Panc1 (cell line): ENCODE measurements at regions of chr16 and their contacts with region 1.

Region 1: GRCh38 chr16:54142787-54143186 is 143.8 kb downstream of the IRX3 start:
- DNase-seq: no peak
- ATAC-seq: no peak
- H3K4me3 ChIP-seq: no peak overlapping the region
- H3K27ac ChIP-seq: no peak overlapping the region
- H3K4me1 ChIP-seq: no peaks in the 10 kb centered on the region
- H3K27me3 ChIP-seq: no peaks in the 10 kb centered on the region
- CTCF ChIP-seq: no peak

Region 2: GRCh38 chr16:54242199-54242598 is 99.4 kb after region 1 on chr16:
- CTCF ChIA-PET with region 1: no interaction called
- POLR2A ChIA-PET with region 1: interaction called, 14 read pairs
- in situ Hi-C with region 1: no loop called
- intact Hi-C with region 1: no loop called
- DNase-seq: no peak
- ATAC-seq: no peak
- H3K4me3 ChIP-seq: no peak overlapping the region
- H3K27ac ChIP-seq: no peak overlapping the region
- H3K4me1 ChIP-seq: no peaks in the 10 kb centered on the region
- H3K27me3 ChIP-seq: no peaks in the 10 kb centered on the region
- CTCF ChIP-seq: no peak

Region 3: DNA sequence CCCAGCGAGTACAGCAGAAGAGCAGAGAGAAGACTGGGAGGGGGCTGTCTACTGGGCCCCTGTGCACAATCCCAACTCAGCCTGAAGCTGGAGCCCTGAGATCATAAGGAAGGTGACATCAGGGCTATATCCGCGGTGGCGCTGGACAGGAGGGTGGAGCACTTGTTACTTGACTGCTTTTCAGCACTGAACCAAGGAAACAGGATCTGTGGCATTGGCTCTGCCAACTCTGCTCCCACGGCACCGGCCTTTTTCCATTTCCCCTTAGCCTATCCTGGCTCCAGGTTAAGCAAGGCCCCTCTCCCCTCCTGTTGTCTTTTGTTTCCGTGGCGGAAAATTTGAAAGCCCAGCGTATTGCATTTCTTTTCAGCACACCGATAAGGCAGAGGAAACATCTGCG is 268.8 kb after region 1 on chr16:
- CTCF ChIA-PET with region 1: no interaction called
- POLR2A ChIA-PET with region 1: no interaction called
- in situ Hi-C with region 1: no loop called
- intact Hi-C with region 1: no loop called
- DNase-seq: no peak
- ATAC-seq: no peak
- H3K4me3 ChIP-seq: no peak overlapping the region
- H3K27ac ChIP-seq: no peak overlapping the region
- H3K4me1 ChIP-seq: no peaks in the 10 kb centered on the region
- H3K27me3 ChIP-seq: no peaks in the 10 kb centered on the region
- CTCF ChIP-seq: no peak